B cell (primary cell): ENCODE measurements at regions of chr13 and their contacts with region 1.

Region 1: DNA sequence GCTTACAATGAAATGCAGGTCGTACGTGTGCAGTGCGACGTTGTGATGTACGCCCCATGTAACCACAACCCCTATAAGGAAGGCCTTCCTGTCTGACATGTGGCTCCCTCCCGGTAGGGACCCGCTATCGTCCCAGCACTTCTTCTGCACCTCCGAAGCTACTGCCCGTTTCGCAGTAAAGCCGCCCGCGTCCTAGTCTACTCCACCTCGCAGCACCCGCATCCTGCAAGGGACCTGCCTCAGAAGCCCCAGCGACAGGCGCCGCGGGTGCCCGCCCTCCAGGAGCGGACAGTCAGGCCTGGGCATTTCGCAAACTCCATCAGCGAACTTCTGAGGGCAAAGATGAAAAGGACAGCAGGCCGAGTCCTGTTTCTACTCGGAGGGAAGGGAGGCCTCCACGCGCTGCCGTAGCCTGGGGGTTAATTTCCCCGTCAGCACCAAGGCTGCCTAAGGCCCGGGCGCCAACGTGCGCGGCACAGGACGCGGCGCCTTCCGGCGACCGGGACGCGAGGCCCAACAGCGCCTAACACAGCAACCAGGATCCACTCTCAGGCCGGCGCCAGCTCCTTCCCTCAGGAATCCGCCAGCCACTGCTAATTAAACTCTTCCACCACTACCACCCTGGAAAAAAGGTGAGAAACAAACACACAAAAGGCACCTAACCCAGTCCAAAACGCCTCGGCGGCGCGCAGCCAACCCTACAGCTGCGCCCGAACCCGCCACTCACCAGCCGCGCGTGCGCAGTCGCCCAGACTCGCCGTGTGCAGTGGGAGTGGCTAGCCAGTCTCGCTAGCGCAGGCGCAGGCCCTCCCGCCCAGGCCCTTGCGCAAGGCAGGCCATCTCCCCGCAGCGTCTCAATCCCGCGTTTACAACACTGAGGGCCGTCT is at the start of gene EEF1AKMT1:
- DNase-seq: peak; percentile 94
- ATAC-seq: peak; percentile 95
- H3K4me3 ChIP-seq: peak within 1 kb of the TSS; percentile 53 to 80 (median 66)
- H3K4me3 Mint-ChIP-seq: peak within 1 kb of the TSS; percentile 96
- H3K27ac ChIP-seq: peak within 1 kb of the TSS; percentile 77 to 88
- H3K27ac Mint-ChIP-seq: peak within 1 kb of the TSS; percentile 100
- H3K4me1 ChIP-seq: peaks cover 7 to 15% of the 10 kb centered on the region in 2 donors
- H3K4me1 Mint-ChIP-seq: peaks cover 16% of the 10 kb centered on the region
- H3K27me3 ChIP-seq: no peaks in the 10 kb centered on the region
- H3K27me3 Mint-ChIP-seq: no peaks in the 10 kb centered on the region
- CTCF ChIP-seq: no peak
- total RNA-seq, gene EEF1AKMT1: 4.1 and 4.9 TPM in 2 replicates

Region 2: DNA sequence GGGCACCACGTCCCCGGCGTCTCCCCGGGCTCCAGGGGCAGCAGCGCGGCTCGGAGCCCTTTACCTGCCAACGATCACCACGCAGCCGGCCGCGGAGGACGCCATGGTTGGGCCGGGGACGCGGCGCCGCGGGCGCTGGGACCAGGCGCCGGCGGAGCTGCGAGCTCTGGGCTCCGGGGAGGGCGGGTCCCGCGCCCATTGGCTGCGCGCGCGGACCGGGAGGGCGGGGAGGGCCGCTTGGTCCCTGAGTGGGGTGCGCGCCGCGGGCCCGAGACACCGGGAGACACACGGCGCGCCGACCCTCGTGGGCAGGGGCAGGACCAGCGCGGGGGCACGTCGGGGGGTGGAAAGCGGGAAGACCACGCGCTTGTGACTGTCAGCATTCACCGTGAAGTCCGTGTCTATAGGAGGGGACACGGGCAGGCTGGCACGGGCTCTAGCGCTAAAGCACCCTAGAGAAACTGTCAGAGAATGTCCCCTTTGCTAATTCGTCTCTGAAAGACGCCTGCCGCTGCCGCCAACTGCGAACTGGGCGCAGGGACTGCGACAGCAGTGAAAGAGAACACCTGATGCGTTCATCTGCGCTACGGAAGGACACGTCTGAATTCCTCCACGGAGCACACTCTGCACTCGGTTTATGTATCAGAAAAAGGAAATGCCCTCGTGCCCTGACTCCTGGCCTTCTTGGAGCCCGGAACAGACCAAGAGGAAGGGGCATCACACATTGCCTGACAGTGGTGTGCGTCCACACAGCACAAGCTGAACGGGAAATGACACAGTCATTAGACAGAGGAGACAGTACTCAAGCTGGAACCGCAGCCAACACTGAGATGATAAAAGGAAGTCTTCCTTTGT is 247.5 kb before region 1 on chr13 and contains the start of gene CRYL1:
- CTCF ChIA-PET with region 1: no interaction called
- POLR2A ChIA-PET with region 1: no interaction called
- intact Hi-C with region 1: loop called (anchors 10 kb)
- DNase-seq: peak; percentile 82
- ATAC-seq: peak; percentile 90
- H3K4me3 ChIP-seq: peak within 1 kb of the TSS; percentile 65 to 79 (median 74)
- H3K4me3 Mint-ChIP-seq: peak within 1 kb of the TSS; percentile 91
- H3K27ac ChIP-seq: peak within 1 kb of the TSS; percentile 60 to 73
- H3K27ac Mint-ChIP-seq: peak within 1 kb of the TSS; percentile 86
- H3K4me1 ChIP-seq: peaks cover 6 to 15% of the 10 kb centered on the region in 2 donors
- H3K4me1 Mint-ChIP-seq: peaks cover 14% of the 10 kb centered on the region
- H3K27me3 ChIP-seq: peaks cover 0 to 5% (median 1%) of the 10 kb centered on the region in 4 experiments
- H3K27me3 Mint-ChIP-seq: peaks cover 6% of the 10 kb centered on the region
- CTCF ChIP-seq: no peak
- total RNA-seq, gene CRYL1: 6.5 and 11.8 TPM in 2 replicates

Region 3: GRCh38 chr13:20703780-20704445 is 69.5 kb before region 1 on chr13:
- CTCF ChIA-PET with region 1: no interaction called
- POLR2A ChIA-PET with region 1: interaction called, 3 read pairs
- intact Hi-C with region 1: loop called (anchors 2 kb)
- DNase-seq: peak; percentile 88
- ATAC-seq: peak; percentile 88
- H3K4me3 ChIP-seq: peak overlapping the region in 3 of 5 experiments; percentile 15 to 40 (median 29)
- H3K4me3 Mint-ChIP-seq: peak overlapping the region; percentile 52
- H3K27ac ChIP-seq: no peak overlapping the region
- H3K27ac Mint-ChIP-seq: no peak overlapping the region
- H3K4me1 ChIP-seq: peaks cover 11 to 12% of the 10 kb centered on the region in 2 donors
- H3K4me1 Mint-ChIP-seq: peaks cover 12% of the 10 kb centered on the region
- H3K27me3 ChIP-seq: peaks cover 0 to 27% (median 18%) of the 10 kb centered on the region in 4 experiments
- H3K27me3 Mint-ChIP-seq: peaks cover 16% of the 10 kb centered on the region
- CTCF ChIP-seq: peak; percentile 43

Region 4: GRCh38 chr13:21137696-21138095 is 364.3 kb after region 1 on chr13:
- CTCF ChIA-PET with region 1: no interaction called
- POLR2A ChIA-PET with region 1: no interaction called
- intact Hi-C with region 1: loop called (anchors 10 kb)
- DNase-seq: no peak
- ATAC-seq: no peak
- H3K4me3 ChIP-seq: no peak overlapping the region
- H3K4me3 Mint-ChIP-seq: no peak overlapping the region
- H3K27ac ChIP-seq: no peak overlapping the region
- H3K27ac Mint-ChIP-seq: no peak overlapping the region
- H3K4me1 ChIP-seq: peaks cover 18 to 22% of the 10 kb centered on the region in 2 donors
- H3K4me1 Mint-ChIP-seq: peaks cover 24% of the 10 kb centered on the region
- H3K27me3 ChIP-seq: peaks cover 0 to 4% (median 2%) of the 10 kb centered on the region in 4 experiments
- H3K27me3 Mint-ChIP-seq: peaks cover 17% of the 10 kb centered on the region
- CTCF ChIP-seq: no peak